ENCODE measurements at regions of chr19 and their contacts with region 1.

Region 1: DNA sequence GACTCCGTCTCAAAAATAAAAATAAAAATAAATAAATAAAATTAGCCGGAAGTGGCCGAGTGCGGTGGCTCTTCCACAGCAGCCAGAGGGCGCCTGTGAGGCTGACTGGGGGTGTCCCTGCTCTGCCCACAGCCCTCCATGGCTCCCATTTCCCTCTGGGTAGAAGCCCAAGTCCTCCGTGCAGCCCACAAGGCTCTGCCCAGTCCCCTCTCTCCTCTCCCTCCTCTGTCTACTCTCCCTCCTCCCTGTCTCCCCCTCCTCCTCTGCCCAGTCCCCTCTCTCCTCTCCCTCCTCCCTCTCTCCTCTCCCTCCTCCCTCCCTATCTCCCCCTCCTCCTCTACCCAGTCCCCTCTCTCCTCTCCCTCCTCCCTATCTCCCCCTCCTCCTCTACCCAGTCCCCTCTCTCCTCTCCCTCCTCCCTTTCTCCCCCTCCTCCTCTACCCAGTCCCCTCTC is 20.4 kb downstream of the MISP start:
- DNase-seq: no peak
- H3K4me3 ChIP-seq: no peak overlapping the region
- H3K27ac ChIP-seq: no peak overlapping the region
- H3K4me1 ChIP-seq: no peaks in the 10 kb centered on the region
- H3K27me3 ChIP-seq: no peaks in the 10 kb centered on the region
- CTCF ChIP-seq: peak in 1 of 3 donors; percentile 25
- POLR2A ChIP-seq: no peak

Region 2: GRCh38 chr19:480016-480855 is 291.1 kb before region 1 on chr19:
- intact Hi-C with region 1: no loop called
- DNase-seq: peak; percentile 57 to 83
- H3K4me3 ChIP-seq: peak overlapping the region in 1 of 3 donors; percentile 55
- H3K27ac ChIP-seq: no peak overlapping the region
- H3K4me1 ChIP-seq: no peaks in the 10 kb centered on the region
- H3K27me3 ChIP-seq: peaks cover 0 to 14% of the 10 kb centered on the region in 2 donors
- CTCF ChIP-seq: peak; percentile 27 to 66 (median 58)
- POLR2A ChIP-seq: no peak

Region 3: GRCh38 chr19:728011-728410 is 43.3 kb before region 1 on chr19:
- intact Hi-C with region 1: loop called (anchors 1 kb)
- DNase-seq: no peak
- H3K4me3 ChIP-seq: no peak overlapping the region
- H3K27ac ChIP-seq: peak overlapping the region; percentile 29 to 91
- H3K4me1 ChIP-seq: no peaks in the 10 kb centered on the region
- H3K27me3 ChIP-seq: no peaks in the 10 kb centered on the region
- CTCF ChIP-seq: no peak
- POLR2A ChIP-seq: no peak

Region 4: DNA sequence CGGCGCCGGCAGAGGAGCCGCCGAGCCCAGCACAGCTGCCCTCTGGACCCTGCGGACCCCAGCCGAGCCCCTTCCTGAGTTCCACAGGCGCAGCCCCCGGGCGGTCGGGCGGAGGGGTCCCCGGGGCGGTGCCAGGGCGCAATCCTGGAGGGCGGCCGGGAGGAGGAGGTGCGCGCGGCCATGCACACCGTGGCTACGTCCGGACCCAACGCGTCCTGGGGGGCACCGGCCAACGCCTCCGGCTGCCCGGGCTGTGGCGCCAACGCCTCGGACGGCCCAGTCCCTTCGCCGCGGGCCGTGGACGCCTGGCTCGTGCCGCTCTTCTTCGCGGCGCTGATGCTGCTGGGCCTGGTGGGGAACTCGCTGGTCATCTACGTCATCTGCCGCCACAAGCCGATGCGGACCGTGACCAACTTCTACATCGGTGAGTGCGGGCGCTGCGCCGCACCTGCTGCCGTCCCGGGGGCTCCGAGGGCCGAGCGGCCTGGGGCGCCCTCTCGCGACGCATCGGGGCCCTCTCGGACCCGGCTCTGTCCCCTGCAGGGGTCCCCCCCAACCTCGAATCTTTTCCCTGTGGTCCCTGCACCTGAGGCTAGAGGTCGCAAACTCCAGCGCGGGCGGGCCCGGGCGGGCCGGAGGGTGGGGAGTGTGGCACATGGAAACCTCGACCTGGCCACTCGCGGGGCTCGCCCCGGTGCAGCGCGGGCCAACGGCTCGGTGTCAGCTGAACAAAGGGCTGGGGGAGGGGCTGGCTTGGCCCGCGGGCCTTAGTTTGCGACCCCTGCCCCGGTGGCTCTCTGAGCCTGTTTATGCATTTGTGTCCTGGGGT is 146.2 kb after region 1 on chr19 and contains the start of gene KISS1R:
- intact Hi-C with region 1: loop called (anchors 5 kb)
- DNase-seq: no peak
- H3K4me3 ChIP-seq: peak within 1 kb of the TSS; percentile 13 to 71 (median 47)
- H3K27ac ChIP-seq: no peak within 1 kb of the TSS
- H3K4me1 ChIP-seq: peaks cover 14 to 31% of the 10 kb centered on the region in 2 donors
- H3K27me3 ChIP-seq: peaks cover 19 to 36% of the 10 kb centered on the region in 2 donors
- CTCF ChIP-seq: peak in 1 of 3 donors; percentile 33
- POLR2A ChIP-seq: no peak
- total RNA-seq, gene KISS1R: 0.15 to 0.33 TPM in 2 of 3 donors, not detected in the other

Region 5: GRCh38 chr19:996051-996838 is 224.9 kb after region 1 on chr19:
- intact Hi-C with region 1: loop called (anchors 10 kb)
- DNase-seq: peak in 1 of 2 donors; percentile 47
- H3K4me3 ChIP-seq: peak overlapping the region in 2 of 3 donors; percentile 0 to 25
- H3K27ac ChIP-seq: no peak overlapping the region
- H3K4me1 ChIP-seq: no peaks in the 10 kb centered on the region
- H3K27me3 ChIP-seq: peaks cover 10 to 57% of the 10 kb centered on the region in 2 donors
- CTCF ChIP-seq: no peak
- POLR2A ChIP-seq: no peak